Heart left ventricle (tissue), 16 donors: ENCODE measurements at regions of chr1 and their contacts with region 1.

Region 1: DNA sequence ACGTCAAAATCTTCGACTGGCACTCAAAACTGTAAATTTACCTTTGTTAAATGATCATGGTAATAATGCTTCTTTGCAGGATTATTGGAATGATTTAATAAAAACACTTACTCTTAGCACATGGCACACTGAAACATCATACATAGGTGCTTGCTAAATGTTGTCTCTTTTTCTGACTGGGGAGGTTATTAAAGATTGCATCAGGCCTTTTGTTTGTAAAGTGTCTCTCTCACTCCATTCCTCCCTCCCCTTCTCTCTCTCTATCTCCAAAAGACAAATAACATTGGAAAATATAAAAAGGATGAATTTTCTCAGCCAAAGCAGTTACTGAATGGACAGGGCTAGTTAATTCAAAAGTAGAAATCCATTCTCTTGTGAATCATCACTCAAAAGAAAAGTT is 404.2 kb downstream of the DPYD start:
- DNase-seq: no peak
- ATAC-seq: no peak
- H3K4me3 ChIP-seq: no peak overlapping the region
- H3K27ac ChIP-seq: no peak overlapping the region
- H3K4me1 ChIP-seq: no peaks in the 10 kb centered on the region
- H3K27me3 ChIP-seq: no peaks in the 10 kb centered on the region
- CTCF ChIP-seq: no peak
- POLR2A ChIP-seq: no peak

Region 2: GRCh38 chr1:97119260-97120158 is 397.1 kb before region 1 on chr1:
- intact Hi-C with region 1: no loop called
- DNase-seq: no peak
- ATAC-seq: no peak
- H3K4me3 ChIP-seq: no peak overlapping the region
- H3K27ac ChIP-seq: no peak overlapping the region
- H3K4me1 ChIP-seq: no peaks in the 10 kb centered on the region
- H3K27me3 ChIP-seq: no peaks in the 10 kb centered on the region
- CTCF ChIP-seq: no peak
- POLR2A ChIP-seq: no peak

Region 3: GRCh38 chr1:97334454-97334853 is 182.1 kb before region 1 on chr1:
- intact Hi-C with region 1: loop called in 1 of 10 experiments (anchors 10 kb)
- DNase-seq: no peak
- ATAC-seq: peak in 3 of 4 donors; percentile 27 to 71 (median 52)
- H3K4me3 ChIP-seq: no peak overlapping the region
- H3K27ac ChIP-seq: no peak overlapping the region
- H3K4me1 ChIP-seq: peaks cover 0 to 5% (median 0%) of the 10 kb centered on the region in 12 donors
- H3K27me3 ChIP-seq: no peaks in the 10 kb centered on the region
- CTCF ChIP-seq: no peak
- POLR2A ChIP-seq: no peak